Right cardiac atrium (tissue), 5 donors: ENCODE measurements at regions of chr2 and their contacts with region 1.

Region 1: DNA sequence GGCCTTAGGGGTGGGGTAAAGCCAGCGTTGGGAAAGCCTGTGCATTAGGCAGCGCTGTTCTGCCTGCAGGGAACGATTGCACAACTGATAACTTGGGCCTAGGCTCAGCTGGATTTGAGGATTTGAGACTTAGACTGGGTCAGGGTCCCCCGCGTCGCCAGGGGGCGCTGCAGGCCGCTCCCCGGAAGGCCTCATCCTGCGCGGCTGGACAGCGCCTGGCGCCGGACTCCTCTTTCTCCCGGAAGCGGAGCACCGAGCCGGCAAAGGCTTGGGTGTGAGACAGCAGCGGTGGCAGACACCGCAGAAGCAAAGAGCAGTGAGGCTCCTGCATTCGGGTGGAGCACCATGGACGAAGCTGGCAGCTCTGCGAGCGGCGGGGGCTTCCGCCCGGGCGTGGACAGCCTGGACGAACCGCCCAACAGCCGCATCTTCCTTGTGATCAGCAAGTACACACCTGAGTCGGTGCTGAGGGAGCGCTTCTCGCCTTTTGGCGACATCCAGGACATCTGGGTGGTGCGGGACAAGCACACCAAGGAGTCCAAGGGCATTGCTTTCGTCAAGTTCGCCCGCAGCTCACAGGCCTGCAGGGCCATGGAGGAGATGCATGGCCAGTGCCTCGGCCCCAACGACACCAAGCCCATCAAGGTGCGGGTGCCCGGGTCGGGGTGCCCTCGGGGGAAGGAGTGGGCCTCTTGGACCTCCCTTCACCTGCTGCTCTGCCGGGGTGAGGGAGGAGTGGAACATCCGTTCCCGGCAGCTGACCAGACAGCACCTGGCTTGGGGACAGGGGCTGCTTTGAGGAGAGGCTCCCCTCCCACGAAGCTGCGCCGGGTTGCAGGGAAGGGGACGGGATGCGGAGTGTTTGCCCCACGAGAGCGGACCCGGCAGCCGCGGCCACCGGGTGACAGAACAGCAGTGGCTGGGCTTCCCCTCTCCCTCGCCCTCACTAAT is at the start of gene RBM45:
- DNase-seq: peak; percentile 94 to 98 (median 97)
- ATAC-seq: peak; percentile 99
- H3K4me3 ChIP-seq: peak within 1 kb of the TSS; percentile 76
- H3K27ac ChIP-seq: peak within 1 kb of the TSS; percentile 50
- H3K4me1 ChIP-seq: no peaks in the 10 kb centered on the region
- H3K27me3 ChIP-seq: no peaks in the 10 kb centered on the region
- total RNA-seq, gene RBM45: 8.1 to 9.9 (median 8.6) TPM

Region 2: GRCh38 chr2:178069551-178069950 is 42.9 kb before region 1 on chr2:
- intact Hi-C with region 1: no loop called
- DNase-seq: no peak
- ATAC-seq: no peak
- H3K4me3 ChIP-seq: no peak overlapping the region
- H3K27ac ChIP-seq: no peak overlapping the region
- H3K4me1 ChIP-seq: no peaks in the 10 kb centered on the region
- H3K27me3 ChIP-seq: no peaks in the 10 kb centered on the region

Region 3: DNA sequence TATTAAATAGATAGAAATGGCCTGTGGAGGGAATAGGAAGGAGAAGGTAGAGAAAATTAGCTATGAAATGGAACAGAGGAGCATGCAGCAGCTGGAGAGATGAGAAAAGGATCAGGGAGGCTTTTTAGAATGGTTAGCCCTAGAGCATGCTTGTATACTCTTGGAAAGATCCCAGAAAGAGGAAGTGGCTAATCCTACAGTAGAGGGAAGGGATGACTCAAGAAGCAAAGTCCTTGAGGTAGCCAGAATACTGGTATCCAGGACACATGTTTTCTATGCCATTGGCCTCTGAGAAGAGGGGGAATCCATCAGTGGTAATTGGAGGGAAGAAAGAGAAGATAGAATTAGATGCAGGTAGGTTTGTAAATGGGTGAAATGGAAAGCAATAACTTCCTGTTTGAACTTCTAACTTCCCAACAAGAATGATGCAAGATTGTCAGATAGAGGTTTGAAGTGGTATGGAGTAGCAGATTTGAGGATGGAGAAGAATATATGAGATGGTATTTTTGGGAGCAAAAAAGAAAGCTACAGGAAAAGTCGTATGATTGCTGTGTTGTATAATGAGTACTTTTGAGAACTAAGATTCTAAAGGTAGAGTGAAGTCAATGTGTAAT is 64.7 kb after region 1 on chr2:
- intact Hi-C with region 1: loop called in 1 of 4 experiments (anchors 10 kb)
- DNase-seq: no peak
- ATAC-seq: no peak
- H3K4me3 ChIP-seq: no peak overlapping the region
- H3K27ac ChIP-seq: no peak overlapping the region
- H3K4me1 ChIP-seq: no peaks in the 10 kb centered on the region
- H3K27me3 ChIP-seq: no peaks in the 10 kb centered on the region

Region 4: GRCh38 chr2:178414266-178415247 is 302.1 kb after region 1 on chr2:
- intact Hi-C with region 1: loop called in 2 of 4 experiments (anchors 5 to 10 kb)
- DNase-seq: peak; percentile 90 to 93 (median 91)
- ATAC-seq: peak; percentile 98
- H3K4me3 ChIP-seq: peak overlapping the region; percentile 91
- H3K27ac ChIP-seq: no peak overlapping the region
- H3K4me1 ChIP-seq: no peaks in the 10 kb centered on the region
- H3K27me3 ChIP-seq: no peaks in the 10 kb centered on the region